Dorsolateral prefrontal cortex (tissue), 120 donors: ENCODE measurements at regions of chr4 and their contacts with region 1.

Region 1: DNA sequence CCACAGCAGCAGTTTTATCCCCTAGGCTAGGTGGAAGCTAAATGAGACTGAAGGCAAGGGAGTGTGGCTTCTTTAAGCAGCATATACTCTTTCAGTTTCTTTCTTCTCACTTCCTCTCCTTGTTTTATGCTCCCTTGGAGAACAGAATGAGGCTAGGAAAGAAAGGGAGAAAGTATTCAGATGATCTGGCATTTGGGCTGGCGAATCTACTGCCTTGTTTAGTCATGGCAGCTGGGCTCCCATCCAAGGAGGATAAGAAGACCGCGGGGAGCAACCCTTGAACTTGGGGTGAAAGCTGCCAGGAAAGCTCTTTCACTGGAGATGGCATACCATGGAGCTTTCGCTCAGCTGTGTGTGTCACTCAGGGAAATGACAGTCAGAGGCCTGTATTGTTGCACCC is 72.1 kb downstream of the ARHGEF38 start:
- DNase-seq: peak in 3 of 10 donors; percentile 7 to 50 (median 11)
- H3K4me3 ChIP-seq: no peak overlapping the region
- H3K27ac ChIP-seq: peak overlapping the region in 11 of 59 donors; percentile 8 to 55 (median 23)
- H3K27me3 ChIP-seq: no peaks in the 10 kb centered on the region
- CTCF ChIP-seq: no peak

Region 2: DNA sequence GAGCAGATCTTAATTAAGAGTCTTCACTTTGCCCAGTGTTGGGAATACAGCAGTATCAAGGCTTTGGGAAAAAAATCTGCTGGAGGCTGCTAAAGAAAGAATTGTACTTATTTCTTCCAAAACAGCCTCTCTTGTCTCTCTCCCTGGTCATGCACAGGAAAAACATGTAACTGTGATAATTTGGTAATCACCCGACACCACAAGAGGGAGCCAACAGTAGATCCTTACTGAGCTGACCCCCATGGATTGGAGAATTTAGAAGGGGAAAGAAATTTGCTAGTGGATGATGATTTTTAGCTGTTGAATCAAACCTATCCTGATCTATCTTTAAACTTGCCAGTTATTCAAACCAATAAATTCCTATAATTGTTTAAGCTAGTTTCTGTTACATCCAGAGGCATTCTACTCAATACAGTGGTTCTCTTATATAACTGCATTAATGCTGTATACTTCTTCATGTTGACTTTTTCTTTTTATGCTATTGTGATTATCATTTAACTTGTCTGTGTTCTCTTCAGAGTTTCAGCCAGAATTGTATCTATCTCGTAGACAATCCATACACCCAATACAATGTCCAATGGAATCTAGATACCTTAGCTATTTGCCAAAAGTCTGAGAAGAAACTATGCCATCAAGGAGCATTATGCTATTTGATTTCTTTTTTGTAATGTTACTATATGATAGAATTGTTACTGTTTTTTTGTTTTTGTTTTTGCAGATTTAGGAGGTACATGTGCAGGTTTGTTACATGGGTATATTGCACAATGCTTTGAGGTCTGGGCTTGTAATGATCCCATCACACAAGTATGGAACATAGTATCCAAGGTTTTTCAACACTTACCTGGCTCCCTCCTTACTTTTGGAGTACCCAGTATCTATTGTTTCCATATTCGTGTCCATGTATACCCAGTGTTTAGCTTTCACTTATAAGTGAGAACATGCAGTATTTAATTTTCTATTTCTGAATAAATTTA is 103.4 kb before region 1 on chr4:
- intact Hi-C with region 1: loop called in 1 of 2 experiments (anchors 10 kb)
- DNase-seq: peak in 2 of 10 donors; percentile 6 to 22
- H3K4me3 ChIP-seq: no peak overlapping the region
- H3K27ac ChIP-seq: no peak overlapping the region
- H3K27me3 ChIP-seq: no peaks in the 10 kb centered on the region
- CTCF ChIP-seq: peak; percentile 43 to 78 (median 66)